CD8-positive, alpha-beta T cell (primary cell): ENCODE measurements at regions of chr6 and their contacts with region 1.

Region 1: DNA sequence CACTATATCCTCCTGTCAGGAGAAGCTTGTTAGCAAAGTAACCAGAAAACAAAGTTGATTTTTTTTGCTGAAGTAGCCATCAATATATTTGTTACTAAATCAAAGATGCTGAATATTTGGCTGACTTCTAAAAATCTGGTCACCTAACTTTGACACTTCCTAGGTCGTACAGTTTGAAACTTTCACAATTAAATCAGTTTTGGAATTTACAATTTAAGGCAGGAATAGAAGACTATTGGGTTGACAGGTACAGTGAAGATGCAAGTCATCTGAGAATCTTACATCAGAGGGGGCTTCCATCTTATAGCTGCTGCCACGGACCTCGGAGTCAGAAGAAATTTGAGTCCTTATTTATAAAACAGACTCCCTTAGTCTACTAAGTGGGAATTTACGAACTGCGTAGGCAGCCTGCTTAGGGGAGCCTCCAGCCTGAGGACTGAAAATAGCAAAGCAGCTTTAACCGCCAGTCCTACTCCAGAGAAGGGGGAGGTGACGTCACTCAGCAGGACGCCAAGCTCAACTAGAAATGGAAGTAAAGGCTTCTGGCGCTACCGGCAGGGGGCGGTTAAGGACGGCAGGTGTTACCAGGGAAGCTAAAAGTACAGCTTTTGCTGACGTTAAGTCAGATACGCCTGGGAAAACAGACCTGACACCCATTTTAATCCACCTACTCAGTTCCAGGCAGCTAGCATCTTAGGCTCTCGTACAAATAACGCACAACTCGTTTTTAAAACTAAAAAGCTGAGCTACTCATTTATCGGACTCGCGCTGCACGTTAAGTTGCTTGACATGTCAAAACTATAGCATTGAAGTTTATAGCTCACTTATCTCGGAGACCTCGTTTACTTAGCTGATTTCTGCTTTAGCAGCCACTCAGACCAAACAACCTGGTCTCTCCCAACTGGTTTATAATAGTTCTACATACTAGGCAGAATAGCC is 61.1 kb upstream of the HFE start:
- DNase-seq: peak; percentile 74 to 99 (median 89)
- ATAC-seq: peak; percentile 43
- H3K4me3 ChIP-seq: peak overlapping the region; percentile 50 to 76
- H3K4me3 Mint-ChIP-seq: peak overlapping the region; percentile 86
- H3K27ac ChIP-seq: peak overlapping the region; percentile 93 to 96
- H3K27ac Mint-ChIP-seq: peak overlapping the region; percentile 98
- H3K4me1 ChIP-seq: peaks cover 25% of the 10 kb centered on the region
- H3K4me1 Mint-ChIP-seq: peaks cover 48% of the 10 kb centered on the region
- H3K27me3 ChIP-seq: no peaks in the 10 kb centered on the region
- H3K27me3 Mint-ChIP-seq: no peaks in the 10 kb centered on the region
- CTCF ChIP-seq: peak; percentile 80

Region 2: DNA sequence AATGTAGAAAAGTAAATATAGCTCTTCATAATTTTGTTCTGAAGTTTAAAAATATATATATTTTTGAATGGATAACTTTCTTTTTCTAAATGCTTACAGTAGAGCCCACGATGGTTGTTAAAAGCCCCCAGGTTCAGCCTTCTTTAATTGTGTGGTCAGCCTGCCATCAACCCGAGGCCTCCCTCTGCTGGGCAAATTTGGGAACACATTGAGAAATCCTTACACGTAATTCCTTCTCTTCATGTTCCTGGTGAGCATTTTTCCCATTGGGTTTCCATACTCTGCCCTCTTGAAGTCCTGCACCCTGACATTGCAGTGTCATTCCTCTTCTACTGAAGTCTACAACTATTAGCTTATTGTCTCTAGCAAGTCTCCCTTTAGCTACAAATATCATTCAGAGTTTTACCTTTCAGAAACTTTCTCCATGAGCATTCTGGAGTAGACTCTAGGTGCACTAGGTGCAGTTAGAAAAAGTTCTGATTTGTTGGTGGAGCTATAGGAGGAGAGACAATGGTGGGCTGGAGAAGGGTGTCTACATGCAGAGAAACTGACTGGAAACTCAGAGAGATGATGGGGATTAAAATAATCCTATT is 23.0 kb before region 1 on chr6:
- CTCF ChIA-PET with region 1: interaction called, 30 read pairs
- POLR2A ChIA-PET with region 1: interaction called, 43 read pairs
- intact Hi-C with region 1: no loop called
- DNase-seq: peak in 7 of 9 experiments; percentile 24 to 71 (median 55)
- ATAC-seq: peak; percentile 72
- H3K4me3 ChIP-seq: no peak overlapping the region
- H3K4me3 Mint-ChIP-seq: no peak overlapping the region
- H3K27ac ChIP-seq: no peak overlapping the region
- H3K27ac Mint-ChIP-seq: no peak overlapping the region
- H3K4me1 ChIP-seq: no peaks in the 10 kb centered on the region
- H3K4me1 Mint-ChIP-seq: peaks cover 3% of the 10 kb centered on the region
- H3K27me3 ChIP-seq: no peaks in the 10 kb centered on the region
- H3K27me3 Mint-ChIP-seq: no peaks in the 10 kb centered on the region
- CTCF ChIP-seq: peak; percentile 94

Region 3: GRCh38 chr6:26087284-26088115 is 61.3 kb after region 1 on chr6 and contains the start of gene HFE:
- CTCF ChIA-PET with region 1: no interaction called
- POLR2A ChIA-PET with region 1: interaction called, 16 read pairs
- intact Hi-C with region 1: no loop called
- DNase-seq: peak in 7 of 9 experiments; percentile 10 to 59 (median 40)
- ATAC-seq: peak; percentile 35
- H3K4me3 ChIP-seq: peak within 1 kb of the TSS; percentile 75 to 84
- H3K4me3 Mint-ChIP-seq: peak within 1 kb of the TSS; percentile 88
- H3K27ac ChIP-seq: peak within 1 kb of the TSS; percentile 56 to 60
- H3K27ac Mint-ChIP-seq: peak within 1 kb of the TSS; percentile 81
- H3K4me1 ChIP-seq: peaks cover 27% of the 10 kb centered on the region
- H3K4me1 Mint-ChIP-seq: peaks cover 36% of the 10 kb centered on the region
- H3K27me3 ChIP-seq: peaks cover 0 to 2% of the 10 kb centered on the region in 2 experiments
- H3K27me3 Mint-ChIP-seq: no peaks in the 10 kb centered on the region
- CTCF ChIP-seq: no peak
- total RNA-seq, gene HFE: 0.30 to 0.44 TPM

Region 4: GRCh38 chr6:26142026-26142425 is 115.9 kb after region 1 on chr6:
- CTCF ChIA-PET with region 1: no interaction called
- POLR2A ChIA-PET with region 1: no interaction called
- intact Hi-C with region 1: no loop called
- DNase-seq: no peak
- ATAC-seq: no peak
- H3K4me3 ChIP-seq: no peak overlapping the region
- H3K4me3 Mint-ChIP-seq: no peak overlapping the region
- H3K27ac ChIP-seq: no peak overlapping the region
- H3K27ac Mint-ChIP-seq: no peak overlapping the region
- H3K4me1 ChIP-seq: no peaks in the 10 kb centered on the region
- H3K4me1 Mint-ChIP-seq: peaks cover under 1% of the 10 kb centered on the region
- H3K27me3 ChIP-seq: no peaks in the 10 kb centered on the region
- H3K27me3 Mint-ChIP-seq: no peaks in the 10 kb centered on the region
- CTCF ChIP-seq: no peak

Region 5: GRCh38 chr6:26216356-26216885 is 190.3 kb after region 1 on chr6:
- CTCF ChIA-PET with region 1: interaction called, 3 read pairs
- POLR2A ChIA-PET with region 1: interaction called, 30 read pairs
- intact Hi-C with region 1: no loop called
- DNase-seq: peak; percentile 61 to 96 (median 73)
- ATAC-seq: peak; percentile 79
- H3K4me3 ChIP-seq: peak overlapping the region; percentile 71 to 74
- H3K4me3 Mint-ChIP-seq: no peak overlapping the region
- H3K27ac ChIP-seq: peak overlapping the region; percentile 82 to 91
- H3K27ac Mint-ChIP-seq: no peak overlapping the region
- H3K4me1 ChIP-seq: peaks cover 19% of the 10 kb centered on the region
- H3K4me1 Mint-ChIP-seq: peaks cover 14% of the 10 kb centered on the region
- H3K27me3 ChIP-seq: no peaks in the 10 kb centered on the region
- H3K27me3 Mint-ChIP-seq: no peaks in the 10 kb centered on the region
- CTCF ChIP-seq: no peak

Region 6: DNA sequence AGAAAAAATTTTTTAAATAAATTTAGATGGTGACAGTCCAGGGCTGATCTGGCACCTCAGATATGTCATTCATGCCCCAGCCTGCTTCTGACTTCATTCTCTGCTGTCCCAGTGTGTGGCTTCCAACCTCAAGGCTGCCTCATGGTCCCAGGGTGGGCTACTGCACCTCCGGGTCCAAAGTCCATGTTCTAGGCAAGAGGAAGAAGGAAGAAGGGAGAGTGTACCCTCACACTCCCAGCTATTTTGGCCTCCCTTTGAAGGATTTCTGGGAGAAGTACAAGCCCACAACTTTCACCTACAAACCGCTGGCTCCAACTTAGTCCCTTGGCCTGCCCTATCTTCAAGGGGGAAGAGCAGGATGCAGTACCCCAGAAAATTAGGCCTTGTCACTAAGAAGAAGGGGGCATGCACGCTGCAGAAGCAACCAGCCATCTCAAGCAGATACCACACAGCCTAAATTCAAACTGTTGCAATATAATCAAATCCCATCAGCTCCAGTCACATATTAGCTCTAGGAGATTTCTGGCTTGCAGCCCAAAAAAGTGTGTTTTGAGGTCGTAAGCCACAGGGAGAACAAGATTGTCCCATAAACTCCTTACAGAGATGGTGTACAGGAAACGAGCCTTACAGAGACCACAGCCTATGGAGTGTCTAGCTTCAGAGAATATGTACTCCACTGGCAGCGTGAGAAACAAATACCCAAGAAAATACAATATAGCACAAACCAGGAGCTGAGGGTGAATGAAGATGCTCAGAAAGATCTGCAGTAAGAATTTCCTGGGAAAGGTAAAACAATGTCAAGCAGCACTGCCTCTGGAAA is 337.9 kb after region 1 on chr6:
- CTCF ChIA-PET with region 1: no interaction called
- POLR2A ChIA-PET with region 1: no interaction called
- intact Hi-C with region 1: no loop called
- DNase-seq: peak in 6 of 9 experiments; percentile 9 to 69 (median 34)
- ATAC-seq: no peak
- H3K4me3 ChIP-seq: peak overlapping the region; percentile 90 to 92
- H3K4me3 Mint-ChIP-seq: no peak overlapping the region
- H3K27ac ChIP-seq: peak overlapping the region; percentile 95
- H3K27ac Mint-ChIP-seq: no peak overlapping the region
- H3K4me1 ChIP-seq: peaks cover 51% of the 10 kb centered on the region
- H3K4me1 Mint-ChIP-seq: peaks cover 53% of the 10 kb centered on the region
- H3K27me3 ChIP-seq: no peaks in the 10 kb centered on the region
- H3K27me3 Mint-ChIP-seq: no peaks in the 10 kb centered on the region
- CTCF ChIP-seq: no peak

Region 7: GRCh38 chr6:27132532-27133280 is 1106.5 kb after region 1 on chr6:
- CTCF ChIA-PET with region 1: no interaction called
- POLR2A ChIA-PET with region 1: interaction called, 25 read pairs
- intact Hi-C with region 1: loop called (anchors 5 kb)
- DNase-seq: peak; percentile 80 to 99 (median 87)
- ATAC-seq: peak; percentile 82
- H3K4me3 ChIP-seq: peak overlapping the region; percentile 76 to 83
- H3K4me3 Mint-ChIP-seq: no peak overlapping the region
- H3K27ac ChIP-seq: peak overlapping the region; percentile 86 to 92
- H3K27ac Mint-ChIP-seq: no peak overlapping the region
- H3K4me1 ChIP-seq: peaks cover 15% of the 10 kb centered on the region
- H3K4me1 Mint-ChIP-seq: peaks cover 21% of the 10 kb centered on the region
- H3K27me3 ChIP-seq: no peaks in the 10 kb centered on the region
- H3K27me3 Mint-ChIP-seq: no peaks in the 10 kb centered on the region
- CTCF ChIP-seq: no peak

Region 8: DNA sequence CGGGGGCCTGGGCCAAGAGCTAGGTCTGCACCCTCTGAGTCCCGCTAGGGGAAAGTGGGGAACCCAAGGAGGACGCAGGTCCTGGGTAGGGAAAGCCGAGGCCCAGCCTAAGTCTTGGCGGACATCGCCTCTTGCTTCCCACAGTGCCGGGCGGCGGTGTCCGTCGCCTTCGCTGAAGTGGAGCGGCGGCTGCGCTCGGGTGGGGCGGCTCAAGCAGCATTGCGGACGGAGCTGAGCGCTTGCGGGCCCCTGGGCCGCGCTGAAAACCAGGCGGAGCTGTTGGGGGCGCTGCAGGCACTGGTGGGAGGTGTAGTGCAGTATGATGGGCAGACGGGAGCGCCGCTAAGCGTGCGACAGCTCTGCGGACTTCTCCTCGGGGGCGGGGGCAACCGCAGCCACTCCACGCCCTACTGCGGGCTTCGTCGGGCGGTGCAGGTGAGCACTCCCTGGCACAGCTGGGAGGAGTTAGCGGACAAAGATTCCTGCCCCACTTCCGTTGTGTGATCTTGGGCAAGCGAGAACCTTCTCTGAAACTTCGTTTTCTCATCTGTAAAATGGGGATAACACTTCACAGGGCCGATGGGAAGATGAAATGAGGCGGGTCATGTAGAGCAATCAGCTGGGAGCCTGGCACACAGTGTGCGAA is 1225.6 kb after region 1 on chr6:
- CTCF ChIA-PET with region 1: no interaction called
- POLR2A ChIA-PET with region 1: no interaction called
- intact Hi-C with region 1: no loop called
- DNase-seq: peak; percentile 18 to 87 (median 63)
- ATAC-seq: peak; percentile 91
- H3K4me3 ChIP-seq: peak overlapping the region; percentile 24 to 71
- H3K4me3 Mint-ChIP-seq: peak overlapping the region; percentile 86
- H3K27ac ChIP-seq: no peak overlapping the region
- H3K27ac Mint-ChIP-seq: no peak overlapping the region
- H3K4me1 ChIP-seq: peaks cover 12% of the 10 kb centered on the region
- H3K4me1 Mint-ChIP-seq: peaks cover 15% of the 10 kb centered on the region
- H3K27me3 ChIP-seq: peaks cover 17 to 19% of the 10 kb centered on the region in 2 experiments
- H3K27me3 Mint-ChIP-seq: peaks cover 55% of the 10 kb centered on the region
- CTCF ChIP-seq: peak; percentile 21

Region 9: DNA sequence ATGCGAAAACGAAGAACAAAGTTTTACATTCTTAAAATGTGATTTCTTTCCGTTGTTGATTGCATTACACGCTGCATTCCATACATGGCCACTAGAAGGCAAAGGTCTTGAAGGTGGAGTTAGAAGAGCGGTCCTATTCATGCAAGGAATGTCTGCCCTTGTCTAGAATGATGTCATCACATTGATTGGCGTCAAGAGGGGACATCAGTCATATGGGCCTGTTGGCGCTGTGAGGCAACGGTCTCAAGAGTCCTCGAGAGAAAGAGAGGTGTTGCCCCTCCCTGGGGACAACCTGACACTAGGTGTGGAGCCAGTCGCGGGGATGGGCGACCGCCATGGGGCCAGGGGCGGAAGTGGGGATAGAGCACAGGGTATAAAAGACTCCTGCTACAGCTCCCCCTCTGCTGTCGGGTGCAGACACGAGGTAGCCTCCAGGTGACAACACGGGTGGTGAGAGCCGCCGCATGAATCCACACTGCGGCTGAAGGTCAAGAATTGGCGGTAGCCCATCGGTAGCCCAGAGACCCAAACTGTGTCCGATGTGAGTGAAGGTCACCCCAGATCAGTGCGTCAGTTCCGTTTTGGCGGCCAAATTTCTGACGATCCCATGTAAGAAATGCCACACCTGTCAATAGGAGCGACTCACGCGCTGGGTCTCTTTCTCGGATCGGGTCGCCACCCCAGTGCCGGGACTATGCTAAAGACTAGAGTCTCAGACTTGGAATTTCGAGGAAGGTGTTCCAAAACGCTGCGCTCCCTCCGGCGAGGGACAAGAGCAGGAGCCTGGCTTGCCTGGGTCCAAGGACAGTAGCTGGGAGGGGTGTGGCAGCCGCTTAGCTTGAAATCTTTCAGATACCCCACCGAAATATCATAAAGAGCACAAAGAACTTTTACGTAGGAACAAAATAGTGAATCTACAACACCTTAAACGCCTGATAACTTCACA is 1539.9 kb after region 1 on chr6:
- CTCF ChIA-PET with region 1: no interaction called
- POLR2A ChIA-PET with region 1: no interaction called
- intact Hi-C with region 1: no loop called
- DNase-seq: peak in 1 of 9 experiments; percentile 19
- ATAC-seq: no peak
- H3K4me3 ChIP-seq: no peak overlapping the region
- H3K4me3 Mint-ChIP-seq: no peak overlapping the region
- H3K27ac ChIP-seq: no peak overlapping the region
- H3K27ac Mint-ChIP-seq: no peak overlapping the region
- H3K4me1 ChIP-seq: no peaks in the 10 kb centered on the region
- H3K4me1 Mint-ChIP-seq: peaks cover 3% of the 10 kb centered on the region
- H3K27me3 ChIP-seq: peaks cover 33 to 38% of the 10 kb centered on the region in 2 experiments
- H3K27me3 Mint-ChIP-seq: peaks cover 77% of the 10 kb centered on the region
- CTCF ChIP-seq: no peak

Region 10: DNA sequence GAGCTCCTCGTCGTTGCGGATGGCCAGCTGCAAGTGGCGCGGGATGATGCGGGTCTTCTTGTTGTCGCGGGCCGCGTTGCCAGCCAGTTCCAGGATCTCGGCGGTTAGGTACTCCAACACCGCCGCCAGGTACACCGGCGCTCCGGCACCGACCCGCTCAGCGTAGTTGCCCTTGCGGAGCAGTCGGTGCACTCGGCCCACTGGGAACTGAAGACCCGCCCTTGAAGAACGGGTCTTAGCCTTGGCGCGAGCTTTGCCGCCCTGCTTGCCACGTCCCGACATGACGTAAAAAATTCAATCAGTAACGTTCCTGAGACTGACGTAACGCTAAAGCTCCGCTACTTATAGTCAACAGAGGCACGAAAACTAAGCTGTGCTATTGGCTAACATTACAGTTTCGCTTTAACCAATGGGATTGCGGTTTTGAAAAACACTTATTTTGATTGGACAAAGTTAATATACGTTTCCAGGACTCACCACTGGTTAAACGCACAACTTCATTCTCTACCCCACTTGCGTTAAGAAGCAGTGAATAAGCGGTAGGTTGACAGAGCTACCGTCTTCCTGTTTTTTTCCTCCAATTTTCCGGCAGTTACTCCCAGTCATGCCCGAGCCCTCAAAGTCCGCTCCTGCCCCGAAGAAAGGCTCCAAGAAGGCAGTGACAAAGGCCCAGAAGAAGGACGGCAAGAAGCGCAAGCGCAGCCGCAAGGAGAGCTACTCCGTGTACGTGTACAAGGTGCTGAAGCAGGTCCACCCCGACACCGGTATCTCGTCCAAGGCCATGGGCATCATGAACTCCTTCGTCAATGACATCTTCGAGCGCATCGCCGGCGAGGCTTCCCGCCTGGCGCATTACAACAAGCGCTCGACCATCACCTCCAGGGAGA is 1812.1 kb after region 1 on chr6:
- CTCF ChIA-PET with region 1: no interaction called
- POLR2A ChIA-PET with region 1: interaction called, 29 read pairs
- intact Hi-C with region 1: loop called in 1 of 2 experiments (anchors 5 kb)
- DNase-seq: peak; percentile 61 to 98 (median 74)
- ATAC-seq: peak; percentile 70
- H3K4me3 ChIP-seq: peak overlapping the region; percentile 64 to 76
- H3K4me3 Mint-ChIP-seq: no peak overlapping the region
- H3K27ac ChIP-seq: peak overlapping the region; percentile 91 to 98
- H3K27ac Mint-ChIP-seq: no peak overlapping the region
- H3K4me1 ChIP-seq: peaks cover 35% of the 10 kb centered on the region
- H3K4me1 Mint-ChIP-seq: peaks cover 21% of the 10 kb centered on the region
- H3K27me3 ChIP-seq: peaks cover 0 to 4% of the 10 kb centered on the region in 2 experiments
- H3K27me3 Mint-ChIP-seq: peaks cover 7% of the 10 kb centered on the region
- CTCF ChIP-seq: no peak